PC-3 (cell line): ENCODE measurements at regions of chr7 and their contacts with region 1.

Region 1: GRCh38 chr7:155694851-155695250 is 50.4 kb downstream of the RBM33 start:
- DNase-seq: peak; percentile 38
- ATAC-seq: peak; percentile 53
- H3K4me3 ChIP-seq: no peak overlapping the region
- H3K27ac ChIP-seq: no peak overlapping the region
- H3K4me1 ChIP-seq: no peaks in the 10 kb centered on the region
- H3K27me3 ChIP-seq: no peaks in the 10 kb centered on the region
- CTCF ChIP-seq: no peak

Region 2: DNA sequence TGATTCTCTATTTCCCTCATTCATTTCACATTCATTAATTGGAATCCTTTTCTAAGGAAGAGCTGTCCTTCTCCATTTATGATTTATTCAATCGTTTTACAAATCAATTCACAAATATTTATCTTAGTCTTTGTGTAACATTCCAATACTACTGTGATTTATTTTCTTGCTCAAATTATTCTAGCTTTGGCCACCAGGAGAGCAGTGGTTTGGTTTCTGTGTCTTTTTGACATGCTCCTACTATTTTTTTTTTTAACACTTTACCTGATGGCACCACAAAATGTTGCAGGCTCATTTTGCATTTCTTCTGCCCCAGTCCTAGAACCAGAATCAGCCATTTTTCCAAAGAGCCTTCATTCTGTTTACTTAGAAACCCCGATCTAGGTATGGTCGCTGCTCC is 63.7 kb before region 1 on chr7:
- CTCF ChIA-PET with region 1: no interaction called
- POLR2A ChIA-PET with region 1: no interaction called
- intact Hi-C with region 1: no loop called
- DNase-seq: no peak
- ATAC-seq: no peak
- H3K4me3 ChIP-seq: no peak overlapping the region
- H3K27ac ChIP-seq: no peak overlapping the region
- H3K4me1 ChIP-seq: no peaks in the 10 kb centered on the region
- H3K27me3 ChIP-seq: no peaks in the 10 kb centered on the region
- CTCF ChIP-seq: 0 out of 2 replicates have a peak, but pooled peaks have one; percentile 22

Region 3: DNA sequence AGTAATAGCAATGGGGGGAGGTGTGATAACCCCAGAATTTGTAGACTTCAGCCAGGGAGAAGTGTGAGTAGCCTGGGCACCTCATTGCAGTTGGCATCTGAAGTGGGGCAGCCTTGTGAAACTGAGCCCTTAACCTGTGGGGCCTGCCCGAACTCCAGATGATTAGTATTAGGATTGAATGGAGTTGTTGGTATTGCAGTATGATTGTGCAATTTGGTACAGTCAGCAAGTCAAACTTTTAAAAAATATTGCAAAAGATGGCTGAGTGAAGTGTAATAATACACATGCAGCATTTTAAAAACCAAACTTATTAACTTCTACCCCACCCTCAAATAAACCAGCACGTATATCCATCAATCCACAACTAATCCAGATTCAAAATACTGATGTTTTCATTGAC is 41.0 kb before region 1 on chr7:
- CTCF ChIA-PET with region 1: no interaction called
- POLR2A ChIA-PET with region 1: no interaction called
- intact Hi-C with region 1: loop called (anchors 5 kb)
- DNase-seq: no peak
- ATAC-seq: no peak
- H3K4me3 ChIP-seq: no peak overlapping the region
- H3K27ac ChIP-seq: no peak overlapping the region
- H3K4me1 ChIP-seq: peaks cover 15% of the 10 kb centered on the region
- H3K27me3 ChIP-seq: no peaks in the 10 kb centered on the region
- CTCF ChIP-seq: no peak

Region 4: GRCh38 chr7:155785536-155785935 is 90.7 kb after region 1 on chr7:
- CTCF ChIA-PET with region 1: no interaction called
- POLR2A ChIA-PET with region 1: no interaction called
- intact Hi-C with region 1: no loop called
- DNase-seq: peak; percentile 36
- ATAC-seq: peak; percentile 37
- H3K4me3 ChIP-seq: no peak overlapping the region
- H3K27ac ChIP-seq: no peak overlapping the region
- H3K4me1 ChIP-seq: no peaks in the 10 kb centered on the region
- H3K27me3 ChIP-seq: no peaks in the 10 kb centered on the region
- CTCF ChIP-seq: no peak

Region 5: GRCh38 chr7:155896531-155897263 is 201.8 kb after region 1 on chr7:
- CTCF ChIA-PET with region 1: no interaction called
- POLR2A ChIA-PET with region 1: no interaction called
- intact Hi-C with region 1: no loop called
- DNase-seq: peak; percentile 88
- ATAC-seq: peak; percentile 95
- H3K4me3 ChIP-seq: 0 out of 2 replicates have a peak overlapping the region, but pooled peaks have one; percentile 12
- H3K27ac ChIP-seq: peak overlapping the region; percentile 19; the same call in 1 of the 2 replicates
- H3K4me1 ChIP-seq: peaks cover 23% of the 10 kb centered on the region
- H3K27me3 ChIP-seq: no peaks in the 10 kb centered on the region
- CTCF ChIP-seq: no peak

Region 6: DNA sequence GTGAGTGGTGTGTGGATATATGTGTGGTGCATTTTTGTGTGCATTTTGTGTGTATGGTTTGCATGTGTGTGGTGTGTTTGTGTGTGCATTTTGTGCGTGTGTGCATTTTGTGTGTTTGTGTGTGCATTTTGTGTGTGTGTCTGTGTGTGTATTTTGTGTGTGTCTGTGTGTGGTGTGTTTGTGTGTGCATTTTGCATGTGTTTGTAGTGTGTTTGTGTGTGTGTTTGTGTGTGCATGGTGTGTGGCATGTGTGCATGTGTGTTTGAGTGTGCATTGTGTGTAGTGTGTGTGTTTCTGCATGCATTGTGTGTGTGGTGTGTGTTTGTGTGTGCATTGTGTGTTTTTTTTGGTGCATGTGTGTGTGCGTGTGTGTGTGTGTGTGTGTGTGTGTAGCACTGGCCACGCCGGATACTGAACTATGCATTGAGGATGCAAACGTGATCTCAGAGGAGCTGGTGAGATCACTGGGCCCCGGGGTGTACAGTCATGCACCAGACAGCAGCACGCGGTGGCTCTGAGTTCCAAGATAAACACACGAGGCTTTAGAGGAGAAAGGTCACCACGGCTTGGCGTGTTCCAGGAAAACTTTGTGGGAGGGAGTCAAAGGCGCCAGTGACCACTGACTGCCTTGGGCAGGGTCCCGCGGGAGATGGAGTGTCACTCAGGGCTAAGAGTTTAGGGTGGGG is 224.0 kb after region 1 on chr7:
- CTCF ChIA-PET with region 1: no interaction called
- POLR2A ChIA-PET with region 1: no interaction called
- intact Hi-C with region 1: no loop called
- DNase-seq: peak; percentile 94
- ATAC-seq: peak; percentile 76
- H3K4me3 ChIP-seq: peak overlapping the region; percentile 7; the same call in 1 of the 2 replicates
- H3K27ac ChIP-seq: peak overlapping the region; percentile 76
- H3K4me1 ChIP-seq: peaks cover 54% of the 10 kb centered on the region
- H3K27me3 ChIP-seq: no peaks in the 10 kb centered on the region
- CTCF ChIP-seq: no peak